Cardiac septum (tissue), 1 donor: ENCODE measurements at regions of chr9 and their contacts with region 1.

Region 1: GRCh38 chr9:34546834-34547827 is 24.3 kb upstream of the ENHO start:
- DNase-seq: no peak

Region 2: DNA sequence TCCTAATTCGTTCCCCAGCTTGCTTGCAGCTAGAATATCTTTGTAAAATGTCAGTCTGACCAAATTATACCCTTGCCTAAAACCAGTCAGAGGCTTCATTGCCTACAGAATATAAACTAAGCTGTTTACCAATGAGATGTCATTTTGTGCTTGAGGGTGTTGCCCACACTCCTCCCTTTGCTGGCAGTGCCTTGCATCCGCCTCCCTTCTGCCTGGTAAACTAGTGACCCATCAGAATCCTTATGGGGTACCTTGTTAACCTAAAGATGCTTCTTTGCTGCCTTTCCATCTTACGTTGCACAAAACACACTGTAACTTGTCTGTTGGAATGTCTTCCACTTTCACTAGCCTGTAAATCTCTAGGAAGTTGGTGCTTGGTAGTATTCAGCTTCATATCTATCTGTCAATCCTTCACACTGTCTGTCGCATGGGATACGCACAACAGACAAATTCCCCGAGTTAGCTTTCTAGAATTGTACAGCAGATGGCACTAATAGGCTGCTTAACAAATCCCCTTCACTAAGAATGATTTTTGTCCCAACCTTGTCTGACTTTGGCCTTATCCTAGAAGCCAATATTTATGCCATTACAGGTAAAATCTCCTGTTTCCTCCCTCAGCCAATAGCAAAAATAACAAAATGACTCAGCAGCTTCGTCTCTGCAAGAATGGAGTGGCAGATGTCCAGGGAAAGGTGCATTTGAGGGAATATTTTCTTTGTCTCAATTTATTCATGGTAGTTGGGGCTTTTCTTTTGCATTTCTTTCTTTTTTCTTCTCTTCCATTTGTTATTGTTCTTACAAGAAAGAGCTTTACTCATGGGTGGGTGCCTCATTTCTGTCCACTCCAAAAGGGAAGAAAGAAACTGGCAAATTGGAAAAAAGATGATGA is 214.8 kb before region 1 on chr9:
- intact Hi-C with region 1: loop called (anchors 5 kb)
- DNase-seq: no peak

Region 3: DNA sequence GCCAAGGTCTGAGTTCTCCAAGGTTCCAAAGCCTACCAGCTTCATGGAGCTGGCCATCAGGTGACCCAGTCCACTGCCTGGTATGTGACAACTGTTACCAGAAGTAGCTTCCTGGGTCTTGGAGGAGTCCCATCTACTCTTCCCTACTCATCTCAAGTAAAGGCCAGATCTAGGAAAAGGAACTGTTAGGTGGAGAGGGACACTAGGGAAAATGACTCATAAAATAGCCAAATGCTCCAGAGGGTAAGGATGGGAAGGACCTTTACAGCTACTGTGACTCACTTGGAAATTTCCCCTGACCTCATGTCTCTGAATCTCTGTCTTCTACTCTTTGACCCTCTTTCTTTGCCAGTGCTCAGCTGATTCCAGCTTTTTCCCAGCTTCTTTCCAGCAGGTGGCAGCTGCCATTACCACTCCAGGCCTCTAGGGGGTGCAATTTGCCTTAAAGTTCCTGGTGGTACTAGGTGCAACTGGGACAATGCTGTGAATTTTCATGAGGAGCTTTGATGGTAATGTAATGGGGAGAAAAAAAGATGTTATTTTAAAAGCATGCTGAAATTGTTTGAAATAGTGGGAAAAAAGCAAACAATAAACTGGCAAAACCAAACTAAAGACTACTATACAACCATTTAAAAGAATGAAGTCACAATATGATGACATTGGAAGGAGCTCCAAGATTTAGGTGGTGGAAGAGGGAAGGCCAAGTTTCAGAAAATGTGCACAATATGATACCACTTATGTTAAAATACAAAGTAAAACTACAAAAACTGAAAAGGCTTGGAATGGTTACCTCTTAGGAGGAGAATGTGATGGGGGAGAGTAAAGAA is 143.4 kb before region 1 on chr9:
- intact Hi-C with region 1: loop called (anchors 5 kb)
- DNase-seq: peak; percentile 82

Region 4: DNA sequence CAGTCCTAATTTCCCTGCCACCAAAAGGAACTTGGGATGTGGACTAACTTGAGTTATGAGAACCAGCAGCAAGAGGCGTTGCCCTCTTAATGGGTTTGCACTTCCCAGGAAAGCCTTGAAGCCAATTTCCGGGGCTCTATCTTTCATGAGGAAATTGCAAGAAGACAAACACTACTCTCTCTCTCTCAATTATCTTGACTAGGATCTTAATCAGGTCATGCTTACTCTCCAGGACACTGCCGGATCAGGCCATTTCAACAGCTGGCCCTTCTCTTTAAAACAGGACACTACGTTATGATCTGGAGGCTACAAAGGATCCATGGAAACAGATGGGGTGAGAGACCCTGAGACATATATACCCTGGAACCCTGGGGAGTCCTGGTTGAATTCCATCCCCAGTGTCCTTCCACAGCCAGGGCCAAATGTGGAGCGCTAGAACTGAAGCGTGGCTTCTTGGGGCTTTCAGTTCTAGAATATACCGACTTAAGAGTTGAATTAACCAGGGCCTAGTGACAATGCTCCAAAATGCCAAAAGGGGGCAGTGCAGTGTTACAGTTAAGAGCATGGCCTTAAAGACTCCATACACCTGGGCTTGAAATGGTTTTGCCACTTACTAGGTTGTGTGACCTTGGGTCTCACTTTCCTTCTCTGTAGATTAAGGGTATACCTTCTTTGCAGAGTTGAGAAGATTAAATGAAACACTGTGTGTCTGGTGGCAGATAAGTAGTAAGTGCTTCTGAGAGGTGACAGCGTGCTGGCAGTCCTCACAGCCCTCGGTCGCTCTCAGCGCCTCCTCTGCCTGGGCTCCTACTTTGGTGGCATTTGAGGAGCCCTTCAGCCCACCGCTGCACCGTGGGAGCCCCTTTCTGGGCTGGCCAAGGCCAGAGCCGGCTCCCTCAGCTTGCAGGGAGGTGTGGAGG is 109.9 kb before region 1 on chr9:
- intact Hi-C with region 1: loop called (anchors 2 kb)
- DNase-seq: no peak

Region 5: GRCh38 chr9:34591248-34591916 is 44.3 kb after region 1 on chr9:
- intact Hi-C with region 1: loop called (anchors 1 kb)
- DNase-seq: peak; percentile 94

Region 6: DNA sequence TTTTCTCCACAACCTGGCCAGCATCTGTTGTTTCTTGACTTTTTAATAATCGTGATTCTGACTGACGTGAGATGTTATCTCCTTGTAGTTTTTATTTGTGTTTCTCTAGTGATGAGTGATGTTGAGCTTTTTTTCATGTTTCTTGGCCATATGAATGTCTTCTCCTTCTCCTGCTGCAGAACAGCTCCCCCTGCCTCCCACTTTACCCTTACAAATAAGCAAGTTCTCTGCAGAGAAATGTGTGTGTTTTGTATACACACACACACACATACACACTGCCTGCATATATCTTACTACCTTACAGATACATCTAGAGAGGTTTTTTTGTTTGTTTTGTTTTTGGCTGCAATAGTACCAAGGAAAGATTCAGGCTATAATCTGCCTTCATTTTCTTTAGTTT is 322.3 kb after region 1 on chr9:
- intact Hi-C with region 1: no loop called
- DNase-seq: no peak